ENCODE measurements at regions of chr12 and their contacts with region 1.

Region 1: DNA sequence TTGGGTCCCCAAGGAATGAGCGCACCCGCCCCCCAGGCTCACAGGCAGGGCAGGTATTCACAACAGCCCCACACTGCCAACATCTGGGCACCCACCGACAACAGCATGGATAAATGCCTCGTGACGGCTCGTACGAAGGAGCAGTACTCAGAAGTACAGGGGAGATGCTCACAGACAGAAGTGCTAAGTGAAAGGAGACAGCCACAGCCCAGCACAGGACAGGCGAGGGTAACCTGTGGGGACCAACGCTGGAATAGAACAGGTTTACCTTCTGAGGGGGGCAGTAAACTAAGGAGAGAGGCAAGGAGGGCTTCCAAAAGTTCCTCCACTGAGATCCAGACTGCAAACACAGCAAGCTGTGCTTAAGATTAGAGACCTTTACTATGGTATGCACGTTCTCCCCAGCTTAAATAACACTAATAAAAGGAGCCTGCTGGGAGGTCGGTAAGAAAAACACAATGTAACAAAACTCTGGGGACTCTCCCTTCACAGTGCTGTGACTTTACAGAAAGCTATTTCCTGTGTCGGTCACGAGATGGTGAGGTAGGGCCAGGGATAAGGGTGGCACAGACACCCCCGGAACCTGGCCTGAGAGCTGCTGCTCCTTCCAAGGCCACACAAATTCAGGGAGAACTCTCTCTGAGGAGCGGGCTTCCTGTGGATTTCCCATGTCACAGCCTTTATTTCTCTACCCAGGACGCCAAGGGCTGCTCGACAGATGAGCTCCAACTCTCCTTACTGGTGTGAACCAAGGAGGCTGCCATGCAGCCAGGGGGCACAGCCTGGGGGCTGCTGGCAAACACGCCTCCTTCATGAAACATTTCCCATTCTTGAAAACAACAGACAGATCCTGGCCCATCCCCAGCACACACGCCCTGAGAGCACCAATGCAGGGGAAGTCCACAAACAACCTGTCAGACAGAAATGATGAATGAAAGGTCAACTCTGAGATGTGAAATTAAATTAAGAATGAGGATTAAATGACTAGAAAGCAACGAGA is 26.3 kb downstream of the SLC15A4 start:
- DNase-seq: peak; percentile 68 to 69
- ATAC-seq: peak; percentile 48 to 69 (median 56)
- H3K4me3 ChIP-seq: peak overlapping the region; percentile 9
- H3K4me3 Mint-ChIP-seq: peak overlapping the region; percentile 94
- H3K27ac ChIP-seq: peak overlapping the region; percentile 100
- H3K27ac Mint-ChIP-seq: peak overlapping the region; percentile 100
- H3K4me1 ChIP-seq: peaks cover 73% of the 10 kb centered on the region
- H3K4me1 Mint-ChIP-seq: peaks cover 70 to 91% of the 10 kb centered on the region in 2 donors
- H3K27me3 ChIP-seq: no peaks in the 10 kb centered on the region
- H3K27me3 Mint-ChIP-seq: no peaks in the 10 kb centered on the region
- CTCF ChIP-seq: no peak

Region 2: GRCh38 chr12:128387811-128388422 is 409.5 kb before region 1 on chr12:
- intact Hi-C with region 1: loop called (anchors 2 kb)
- DNase-seq: peak; percentile 27 to 33
- ATAC-seq: peak in 1 of 3 donors; percentile 49
- H3K4me3 ChIP-seq: no peak overlapping the region
- H3K4me3 Mint-ChIP-seq: no peak overlapping the region
- H3K27ac ChIP-seq: peak overlapping the region; percentile 99
- H3K27ac Mint-ChIP-seq: peak overlapping the region; percentile 97 to 99
- H3K4me1 ChIP-seq: peaks cover 23% of the 10 kb centered on the region
- H3K4me1 Mint-ChIP-seq: peaks cover 18 to 25% of the 10 kb centered on the region in 2 donors
- H3K27me3 ChIP-seq: no peaks in the 10 kb centered on the region
- H3K27me3 Mint-ChIP-seq: peaks cover 15 to 18% of the 10 kb centered on the region in 2 donors
- CTCF ChIP-seq: peak; percentile 65

Region 3: DNA sequence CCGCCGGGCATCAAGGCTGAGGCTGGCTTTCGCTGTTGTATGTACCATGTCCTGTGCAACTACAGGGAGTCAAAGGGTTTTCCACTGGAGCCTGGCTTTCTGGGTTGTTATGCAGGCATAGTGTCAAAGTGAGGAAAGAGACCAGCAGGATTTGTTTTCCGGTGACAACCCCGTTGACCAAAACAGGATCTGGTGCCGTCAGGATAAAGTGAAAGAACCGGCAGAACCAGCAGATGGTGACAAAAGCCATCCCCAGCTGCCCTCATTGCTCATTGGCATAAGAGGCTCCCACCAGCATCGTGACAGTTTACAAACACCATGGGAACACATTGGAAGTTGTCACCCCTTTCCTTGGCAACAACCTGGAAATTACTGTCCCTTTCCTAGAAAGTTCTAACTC is 54.4 kb before region 1 on chr12:
- intact Hi-C with region 1: loop called (anchors 1 kb)
- DNase-seq: no peak
- ATAC-seq: no peak
- H3K4me3 ChIP-seq: no peak overlapping the region
- H3K4me3 Mint-ChIP-seq: peak overlapping the region; percentile 28
- H3K27ac ChIP-seq: peak overlapping the region; percentile 89
- H3K27ac Mint-ChIP-seq: peak overlapping the region; percentile 91 to 93
- H3K4me1 ChIP-seq: peaks cover 49% of the 10 kb centered on the region
- H3K4me1 Mint-ChIP-seq: peaks cover 78% of the 10 kb centered on the region in 2 donors
- H3K27me3 ChIP-seq: no peaks in the 10 kb centered on the region
- H3K27me3 Mint-ChIP-seq: no peaks in the 10 kb centered on the region
- CTCF ChIP-seq: no peak

Region 4: DNA sequence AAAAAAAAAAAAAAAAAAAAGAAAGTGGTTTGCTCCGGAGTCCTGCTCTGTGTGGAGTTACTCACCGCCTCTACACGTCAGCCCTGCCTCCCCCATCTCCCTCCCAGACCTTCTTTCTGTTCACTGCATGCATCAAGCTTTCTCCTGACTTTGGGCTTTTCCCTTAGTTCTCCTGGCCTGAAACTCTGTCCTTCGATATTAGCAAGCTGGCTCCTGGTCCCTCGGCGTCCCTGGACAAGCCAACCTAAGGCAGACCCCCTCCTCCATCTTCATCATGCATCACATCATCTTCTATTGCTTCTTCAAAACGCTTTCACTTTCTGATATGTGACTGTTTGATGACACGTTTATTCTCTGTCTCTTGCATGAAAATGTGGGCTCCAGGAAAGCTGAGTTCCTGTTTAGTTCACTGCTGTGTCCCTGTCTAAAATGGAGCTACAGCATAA is 14.3 kb before region 1 on chr12:
- intact Hi-C with region 1: loop called (anchors 1 kb)
- DNase-seq: peak; percentile 59 to 72
- ATAC-seq: peak; percentile 83 to 89 (median 85)
- H3K4me3 ChIP-seq: peak overlapping the region; percentile 1
- H3K4me3 Mint-ChIP-seq: peak overlapping the region; percentile 86
- H3K27ac ChIP-seq: peak overlapping the region; percentile 91
- H3K27ac Mint-ChIP-seq: peak overlapping the region; percentile 96 to 97
- H3K4me1 ChIP-seq: peaks cover 23% of the 10 kb centered on the region
- H3K4me1 Mint-ChIP-seq: peaks cover 28 to 39% of the 10 kb centered on the region in 2 donors
- H3K27me3 ChIP-seq: no peaks in the 10 kb centered on the region
- H3K27me3 Mint-ChIP-seq: no peaks in the 10 kb centered on the region
- CTCF ChIP-seq: no peak

Region 5: DNA sequence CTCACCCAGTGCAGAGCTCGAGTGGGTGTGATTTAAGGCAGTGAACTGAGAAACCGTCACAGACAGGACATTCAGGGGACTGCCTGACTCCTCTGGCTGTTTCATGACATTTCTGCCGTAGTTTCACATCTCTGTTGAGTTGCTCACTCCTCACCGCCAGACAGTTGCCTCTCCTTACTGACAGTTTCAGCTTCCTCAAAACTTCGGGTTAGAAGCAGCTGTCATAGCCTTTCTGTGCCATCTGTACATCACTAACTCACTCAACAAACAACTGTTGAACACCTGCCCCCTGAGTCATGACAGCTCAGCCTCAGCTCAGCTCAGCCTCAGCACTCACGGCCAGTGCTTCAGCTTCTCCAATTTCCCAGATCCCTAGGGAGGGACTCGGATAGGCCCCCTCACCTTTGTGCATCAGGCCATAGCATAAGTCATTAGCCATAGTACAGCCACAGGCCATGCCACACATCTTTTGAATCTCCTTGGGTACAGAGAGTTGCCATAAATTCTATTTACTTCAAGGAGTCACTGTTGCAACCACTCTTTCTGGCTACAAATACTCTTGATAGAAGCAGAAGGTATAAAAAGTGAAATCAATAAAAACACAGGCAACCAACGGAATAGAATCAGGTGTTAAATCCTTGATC is 32.6 kb after region 1 on chr12:
- intact Hi-C with region 1: loop called (anchors 5 kb)
- DNase-seq: peak in 1 of 2 donors; percentile 39
- ATAC-seq: peak; percentile 77 to 85 (median 84)
- H3K4me3 ChIP-seq: no peak overlapping the region
- H3K4me3 Mint-ChIP-seq: peak overlapping the region; percentile 79
- H3K27ac ChIP-seq: peak overlapping the region; percentile 69
- H3K27ac Mint-ChIP-seq: peak overlapping the region; percentile 93 to 95
- H3K4me1 ChIP-seq: peaks cover 21% of the 10 kb centered on the region
- H3K4me1 Mint-ChIP-seq: peaks cover 21 to 33% of the 10 kb centered on the region in 2 donors
- H3K27me3 ChIP-seq: no peaks in the 10 kb centered on the region
- H3K27me3 Mint-ChIP-seq: no peaks in the 10 kb centered on the region
- CTCF ChIP-seq: no peak

Region 6: GRCh38 chr12:128840862-128841468 is 43.5 kb after region 1 on chr12:
- intact Hi-C with region 1: no loop called
- DNase-seq: no peak
- ATAC-seq: no peak
- H3K4me3 ChIP-seq: no peak overlapping the region
- H3K4me3 Mint-ChIP-seq: no peak overlapping the region
- H3K27ac ChIP-seq: no peak overlapping the region
- H3K27ac Mint-ChIP-seq: peak overlapping the region in 1 of 2 donors; percentile 73
- H3K4me1 ChIP-seq: peaks cover 11% of the 10 kb centered on the region
- H3K4me1 Mint-ChIP-seq: peaks cover 10 to 15% of the 10 kb centered on the region in 2 donors
- H3K27me3 ChIP-seq: no peaks in the 10 kb centered on the region
- H3K27me3 Mint-ChIP-seq: peaks cover 0 to 4% of the 10 kb centered on the region in 2 donors
- CTCF ChIP-seq: no peak

Measured in natural killer cell (primary cell).